Cardiac septum (tissue), 1 donor: ENCODE measurements at regions of chr5 and their contacts with region 1.

Region 1: GRCh38 chr5:78294248-78295034 is at the start of gene AP3B1:
- DNase-seq: peak; percentile 100
- total RNA-seq, gene AP3B1: 23.2 TPM

Region 2: GRCh38 chr5:78359831-78360673 is 65.6 kb after region 1 on chr5 and contains the start of gene SCAMP1:
- intact Hi-C with region 1: loop called (anchors 1 kb)
- DNase-seq: peak; percentile 97
- total RNA-seq, gene SCAMP1: 29.1 TPM